Posterior vena cava (tissue), 2 donors: ENCODE measurements at regions of chr4 and their contacts with region 1.

Region 1: DNA sequence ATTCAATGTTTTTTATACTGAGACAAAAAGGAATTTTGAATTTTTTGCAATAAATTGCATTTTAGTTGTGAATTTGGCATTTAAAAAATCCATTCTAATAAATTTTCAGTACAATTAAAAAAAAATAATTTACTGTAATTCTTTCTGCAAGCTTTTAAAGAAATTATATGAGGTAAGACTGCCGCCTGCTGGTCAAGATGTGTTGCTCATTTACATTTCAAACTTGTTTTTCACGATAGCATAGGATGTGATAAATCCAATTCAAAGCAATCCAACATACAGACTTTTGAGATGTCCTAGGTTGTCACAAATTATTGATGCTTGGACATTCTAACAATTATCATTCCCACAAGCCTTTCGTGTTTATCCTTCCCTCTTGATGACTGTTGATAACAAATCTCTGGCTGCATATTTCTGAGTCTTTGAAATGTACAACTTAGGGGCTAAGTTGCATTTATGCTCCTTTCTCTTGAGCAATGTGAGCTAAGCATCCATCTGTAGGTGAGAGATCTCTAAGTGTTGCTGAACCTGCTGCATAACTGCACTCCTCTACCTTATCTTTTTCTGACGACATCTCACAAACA is 21.7 kb upstream of the MFAP3L start:
- DNase-seq: no peak

Region 2: DNA sequence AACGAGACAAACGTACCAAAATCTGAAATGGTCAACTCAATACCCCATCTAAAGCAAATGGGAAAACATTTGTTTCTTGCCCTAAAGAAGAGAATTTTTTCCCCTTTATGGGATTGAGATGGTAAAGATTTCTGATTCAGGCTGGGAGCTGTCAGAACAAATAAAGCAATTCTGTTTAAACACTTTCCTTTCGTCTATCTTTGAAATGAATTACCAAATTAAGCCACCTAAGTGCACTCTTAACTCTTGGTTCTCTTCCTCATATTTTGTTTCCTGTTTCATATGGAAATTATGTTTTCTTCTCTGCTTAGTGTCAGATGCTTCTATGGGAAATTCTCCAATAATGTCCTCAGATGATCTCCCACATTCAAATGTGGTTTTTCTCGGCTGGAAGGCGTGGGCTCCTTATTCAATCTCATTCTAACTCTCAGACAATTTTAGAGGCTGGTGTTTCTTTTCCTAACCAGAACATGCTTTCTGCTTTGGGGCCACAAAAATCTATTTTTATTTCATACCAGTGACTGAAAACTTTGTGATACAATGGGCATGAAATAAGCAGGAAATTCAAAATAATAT is 239.8 kb before region 1 on chr4:
- intact Hi-C with region 1: loop called (anchors 2 to 5 kb)
- DNase-seq: no peak

Region 3: GRCh38 chr4:169993531-169993930 is 54.3 kb before region 1 on chr4:
- intact Hi-C with region 1: no loop called
- DNase-seq: no peak

Region 4: DNA sequence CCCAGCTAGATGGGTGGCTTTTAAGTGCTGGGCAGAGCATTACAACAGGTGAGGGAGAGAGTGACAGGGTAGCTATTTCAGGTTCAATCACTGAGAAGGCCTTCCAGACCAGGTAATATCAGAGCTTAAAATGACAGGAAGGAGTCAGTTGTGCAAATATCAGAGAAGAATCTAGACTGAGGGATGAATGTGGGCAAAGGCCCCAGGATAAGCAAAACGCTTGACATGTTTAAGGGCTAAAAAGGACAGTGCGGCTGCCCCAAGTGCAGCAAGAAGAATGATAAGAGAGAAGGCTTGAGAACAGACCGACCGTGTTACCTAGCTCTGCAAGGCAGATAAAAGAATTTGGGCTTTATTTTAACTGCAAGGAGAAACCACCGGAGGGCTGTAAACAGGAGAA is 23.3 kb after region 1 on chr4:
- intact Hi-C with region 1: no loop called
- DNase-seq: no peak